ENCODE measurements at regions of chr6 and their contacts with region 1.

Region 1: DNA sequence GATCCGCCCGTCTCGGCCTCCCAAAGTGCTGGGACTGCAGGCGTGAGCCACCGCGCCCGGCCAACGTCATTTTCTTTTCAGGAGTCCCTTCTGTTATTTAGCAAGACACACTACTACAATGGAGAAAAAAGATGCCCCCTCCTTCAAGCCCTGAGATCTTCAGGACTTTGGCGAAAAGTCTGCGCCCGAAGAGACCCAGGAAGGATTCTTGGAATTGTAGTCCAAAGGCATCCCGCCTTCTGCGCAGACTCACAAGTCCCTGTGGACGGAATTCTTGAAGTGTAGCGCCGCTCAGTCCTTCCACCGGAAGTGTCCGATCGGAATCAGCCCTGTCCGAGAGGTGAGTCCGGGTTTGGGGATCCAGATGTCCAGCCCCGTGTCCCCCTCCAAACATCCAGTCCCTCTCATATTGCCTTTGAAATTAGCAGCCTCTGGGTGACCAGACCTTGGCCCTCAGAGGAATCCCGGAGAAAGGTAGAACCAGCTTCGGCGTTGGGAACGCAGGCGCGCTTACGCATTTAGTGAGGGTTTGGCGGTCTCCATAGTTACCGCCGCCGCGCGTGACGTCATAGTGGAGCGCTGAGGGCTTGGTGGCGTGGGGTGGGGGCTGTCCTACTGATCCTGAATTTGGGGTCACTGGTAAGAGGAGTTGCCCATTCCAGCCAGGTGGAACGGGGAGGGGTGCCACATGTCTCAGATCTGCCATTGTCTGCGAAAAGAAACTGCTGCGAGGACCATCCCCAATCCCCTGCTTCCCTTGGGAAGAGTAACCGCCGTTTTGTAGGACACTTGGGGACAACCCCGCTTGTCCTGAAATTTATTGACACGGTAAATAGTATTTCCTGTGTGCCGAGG is 490 bp downstream of the ZNF165 start:
- DNase-seq: peak; percentile 93
- ATAC-seq: peak; percentile 84
- H3K4me3 Mint-ChIP-seq: peak overlapping the region; percentile 93
- H3K27ac Mint-ChIP-seq: peak overlapping the region; percentile 97
- H3K4me1 Mint-ChIP-seq: peaks cover 29% of the 10 kb centered on the region
- H3K27me3 Mint-ChIP-seq: no peaks in the 10 kb centered on the region

Region 2: GRCh38 chr6:27388293-27389197 is 692.3 kb before region 1 on chr6 and contains the start of gene ZNF391:
- CTCF ChIA-PET with region 1: no interaction called
- POLR2A ChIA-PET with region 1: no interaction called
- intact Hi-C with region 1: loop called in 1 of 2 experiments (anchors 2 kb)
- DNase-seq: peak; percentile 81
- ATAC-seq: peak; percentile 95
- H3K4me3 Mint-ChIP-seq: peak within 1 kb of the TSS; percentile 95
- H3K27ac Mint-ChIP-seq: peak within 1 kb of the TSS; percentile 93
- H3K4me1 Mint-ChIP-seq: peaks cover 14% of the 10 kb centered on the region
- H3K27me3 Mint-ChIP-seq: peaks cover 6% of the 10 kb centered on the region
- total RNA-seq, gene ZNF391: 4.3 to 6.2 TPM

Region 3: DNA sequence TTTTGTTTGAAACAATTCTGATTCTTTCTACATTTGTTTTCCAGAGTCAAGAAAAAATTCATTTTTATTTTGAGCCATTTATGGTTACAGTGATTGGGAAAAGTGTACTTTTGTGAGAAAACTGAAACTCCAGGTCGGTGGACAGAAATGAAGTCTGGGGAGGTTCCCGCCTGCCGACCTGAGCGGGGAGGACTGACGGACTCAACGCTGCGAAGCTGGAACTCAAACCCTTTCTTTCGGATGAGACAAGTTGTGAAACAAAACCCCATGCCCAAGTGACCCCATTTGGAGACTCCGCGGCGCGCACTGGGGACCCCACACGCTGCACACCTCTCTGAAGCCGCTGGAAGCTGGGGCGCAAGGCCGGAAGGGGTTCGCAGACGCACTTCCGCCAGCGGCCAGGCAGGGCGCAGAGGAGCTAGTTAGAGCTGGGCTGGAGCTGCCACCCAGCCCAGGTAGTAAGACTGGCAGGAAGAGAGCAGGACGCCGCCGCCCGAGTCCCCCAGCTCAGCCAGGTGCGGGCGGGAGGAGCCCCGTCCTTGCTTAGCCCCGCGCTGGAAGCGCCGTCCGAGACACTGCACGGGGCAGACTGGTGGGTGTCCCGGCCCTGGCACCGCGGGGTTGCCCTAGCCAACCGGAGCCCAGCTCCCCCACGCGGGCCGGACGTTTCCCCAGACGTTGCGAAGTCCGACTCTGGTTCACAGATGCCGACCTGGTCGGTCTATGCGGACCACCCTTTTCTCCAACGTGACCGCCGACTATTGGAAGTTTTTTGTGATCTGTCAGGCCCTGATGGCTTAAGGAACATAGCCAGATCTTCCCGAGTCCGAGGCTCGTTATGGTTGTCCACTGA is 23.8 kb after region 1 on chr6:
- CTCF ChIA-PET with region 1: interaction called, 3 read pairs
- POLR2A ChIA-PET with region 1: interaction called, 4 read pairs
- intact Hi-C with region 1: loop called (anchors 1 kb)
- DNase-seq: peak; percentile 91
- ATAC-seq: peak; percentile 100
- H3K4me3 Mint-ChIP-seq: peak overlapping the region; percentile 82
- H3K27ac Mint-ChIP-seq: peak overlapping the region; percentile 90
- H3K4me1 Mint-ChIP-seq: peaks cover 9% of the 10 kb centered on the region
- H3K27me3 Mint-ChIP-seq: peaks cover 4% of the 10 kb centered on the region

Region 4: DNA sequence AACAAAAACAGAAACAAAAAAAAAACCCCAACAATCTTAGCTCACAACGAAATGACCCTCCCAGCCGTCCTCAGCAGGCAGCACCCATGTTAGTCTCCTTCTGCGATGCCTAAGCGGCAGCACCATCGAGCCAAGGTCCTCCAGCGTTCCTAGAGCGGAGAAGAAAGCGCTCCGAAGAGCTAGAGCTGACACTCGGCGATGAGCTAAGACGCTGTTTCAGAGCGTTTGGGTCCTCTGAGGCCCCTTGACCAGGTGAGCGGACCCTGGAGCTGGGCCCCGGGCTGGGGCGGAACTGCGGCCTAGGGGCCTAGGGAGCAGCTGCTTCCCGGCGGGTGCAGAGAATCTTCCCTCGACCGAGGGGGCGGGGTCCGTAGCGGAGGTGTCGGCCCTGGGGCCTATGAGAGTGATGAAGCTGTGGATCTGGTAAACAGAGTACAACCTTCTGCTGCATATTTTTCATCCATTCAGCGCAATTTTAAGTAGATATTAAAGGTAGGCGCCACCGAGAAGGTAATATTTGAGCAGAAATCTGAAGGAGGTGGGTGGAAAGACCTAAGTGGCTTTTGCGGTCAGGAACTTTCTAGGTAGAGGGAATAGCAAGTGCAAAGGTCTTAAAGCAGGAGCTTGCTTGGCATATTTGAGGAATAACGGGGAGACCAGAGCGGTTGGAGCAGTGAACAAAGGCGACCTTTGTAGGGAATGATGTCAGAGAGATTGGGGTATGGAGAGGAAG is 186.3 kb after region 1 on chr6 and contains the start of gene ZSCAN26:
- CTCF ChIA-PET with region 1: no interaction called
- POLR2A ChIA-PET with region 1: no interaction called
- intact Hi-C with region 1: loop called in 1 of 2 experiments (anchors 5 kb)
- DNase-seq: peak; percentile 91
- ATAC-seq: peak; percentile 90
- H3K4me3 Mint-ChIP-seq: no peak within 1 kb of the TSS
- H3K27ac Mint-ChIP-seq: no peak within 1 kb of the TSS
- H3K4me1 Mint-ChIP-seq: peaks cover 32% of the 10 kb centered on the region
- H3K27me3 Mint-ChIP-seq: no peaks in the 10 kb centered on the region
- total RNA-seq, gene ZSCAN26: 5.0 to 6.7 TPM

Region 5: GRCh38 chr6:28355743-28356665 is 275.1 kb after region 1 on chr6:
- CTCF ChIA-PET with region 1: no interaction called
- POLR2A ChIA-PET with region 1: no interaction called
- intact Hi-C with region 1: loop called in 1 of 2 experiments (anchors 2 kb)
- DNase-seq: peak; percentile 71
- ATAC-seq: peak; percentile 85
- H3K4me3 Mint-ChIP-seq: peak overlapping the region; percentile 75
- H3K27ac Mint-ChIP-seq: peak overlapping the region; percentile 81
- H3K4me1 Mint-ChIP-seq: peaks cover 15% of the 10 kb centered on the region
- H3K27me3 Mint-ChIP-seq: no peaks in the 10 kb centered on the region

Region 6: GRCh38 chr6:28923318-28924102 is 842.7 kb after region 1 on chr6 and contains the start of gene TRIM27:
- CTCF ChIA-PET with region 1: no interaction called
- POLR2A ChIA-PET with region 1: no interaction called
- intact Hi-C with region 1: loop called in 1 of 2 experiments (anchors 1 kb)
- DNase-seq: peak; percentile 88
- ATAC-seq: peak; percentile 81
- H3K4me3 Mint-ChIP-seq: peak within 1 kb of the TSS; percentile 96
- H3K27ac Mint-ChIP-seq: peak within 1 kb of the TSS; percentile 88
- H3K4me1 Mint-ChIP-seq: peaks cover 36% of the 10 kb centered on the region
- H3K27me3 Mint-ChIP-seq: no peaks in the 10 kb centered on the region
- total RNA-seq, gene TRIM27: 48.5 to 54.6 TPM

Measured in activated CD4-positive, alpha-beta T cell treated with anti-CD3 and anti-CD28 coated beads for 36 hours (primary cell).